Activated CD4-positive, alpha-beta T cell treated with anti-CD3 and anti-CD28 coated beads, Interleukin-2, amount 10 ng/mL, durations not matched to agents 24 days and 14 days (primary cell): ENCODE measurements at regions of chr11 and their contacts with region 1.

Region 1: GRCh38 chr11:78651923-78652842 is 77.5 kb upstream of the NARS2 start:
- DNase-seq: no peak
- H3K4me3 Mint-ChIP-seq: peak overlapping the region; percentile 46
- H3K27ac Mint-ChIP-seq: peak overlapping the region; percentile 91
- H3K4me1 Mint-ChIP-seq: peaks cover 31% of the 10 kb centered on the region
- H3K27me3 Mint-ChIP-seq: no peaks in the 10 kb centered on the region

Region 2: GRCh38 chr11:78605296-78605695 is 46.9 kb before region 1 on chr11:
- intact Hi-C with region 1: no loop called
- DNase-seq: no peak
- H3K4me3 Mint-ChIP-seq: no peak overlapping the region
- H3K27ac Mint-ChIP-seq: no peak overlapping the region
- H3K4me1 Mint-ChIP-seq: no peaks in the 10 kb centered on the region
- H3K27me3 Mint-ChIP-seq: peaks cover 23% of the 10 kb centered on the region

Region 3: GRCh38 chr11:78635814-78636506 is 16.2 kb before region 1 on chr11:
- intact Hi-C with region 1: loop called (anchors 2 kb)
- DNase-seq: no peak
- H3K4me3 Mint-ChIP-seq: peak overlapping the region; percentile 8
- H3K27ac Mint-ChIP-seq: peak overlapping the region; percentile 62
- H3K4me1 Mint-ChIP-seq: peaks cover 19% of the 10 kb centered on the region
- H3K27me3 Mint-ChIP-seq: no peaks in the 10 kb centered on the region

Region 4: GRCh38 chr11:78759071-78759470 is 106.9 kb after region 1 on chr11:
- intact Hi-C with region 1: no loop called
- DNase-seq: no peak
- H3K4me3 Mint-ChIP-seq: no peak overlapping the region
- H3K27ac Mint-ChIP-seq: no peak overlapping the region
- H3K4me1 Mint-ChIP-seq: no peaks in the 10 kb centered on the region
- H3K27me3 Mint-ChIP-seq: no peaks in the 10 kb centered on the region